GM12878 (cell line): ENCODE measurements at regions of chr6 and their contacts with region 1.

Region 1: GRCh38 chr6:34638834-34639736 is 57.5 kb downstream of the ILRUN start:
- DNase-seq: peak; percentile 87
- ATAC-seq: peak; percentile 86
- H3K4me3 ChIP-seq: no peak overlapping the region
- H3K27ac ChIP-seq: peak overlapping the region; percentile 93
- H3K4me1 ChIP-seq: peaks cover 27% of the 10 kb centered on the region
- H3K27me3 ChIP-seq: no peaks in the 10 kb centered on the region
- CTCF ChIP-seq: no peak
- EP300 ChIP-seq: peak; percentile 79 to 80
- POLR2A ChIP-seq: no peak
- RAD21 ChIP-seq: no peak

Region 2: GRCh38 chr6:34650823-34651222 is 11.7 kb after region 1 on chr6:
- CTCF ChIA-PET with region 1: interaction called, 131 read pairs
- POLR2A ChIA-PET with region 1: interaction called, 246 read pairs
- RAD21 ChIA-PET with region 1: interaction called, 239 read pairs
- SMC1A ChIA-PET with region 1: interaction called, 251 read pairs
- in situ Hi-C with region 1: no loop called
- intact Hi-C with region 1: loop called (anchors 1 kb)
- DNase-seq: no peak
- ATAC-seq: no peak
- H3K4me3 ChIP-seq: no peak overlapping the region
- H3K27ac ChIP-seq: peak overlapping the region; percentile 71
- H3K4me1 ChIP-seq: peaks cover 35% of the 10 kb centered on the region
- H3K27me3 ChIP-seq: no peaks in the 10 kb centered on the region
- CTCF ChIP-seq: no peak
- EP300 ChIP-seq: no peak
- POLR2A ChIP-seq: no peak
- RAD21 ChIP-seq: no peak

Region 3: GRCh38 chr6:34664256-34664971 is 25.3 kb after region 1 on chr6:
- CTCF ChIA-PET with region 1: interaction called, 6 read pairs
- POLR2A ChIA-PET with region 1: interaction called, 246 read pairs
- RAD21 ChIA-PET with region 1: interaction called, 239 read pairs
- SMC1A ChIA-PET with region 1: interaction called, 251 read pairs
- in situ Hi-C with region 1: no loop called
- intact Hi-C with region 1: no loop called
- DNase-seq: no peak
- ATAC-seq: no peak
- H3K4me3 ChIP-seq: peak overlapping the region; percentile 2; the same call in 1 of the 2 replicates
- H3K27ac ChIP-seq: peak overlapping the region; percentile 84
- H3K4me1 ChIP-seq: peaks cover 48% of the 10 kb centered on the region
- H3K27me3 ChIP-seq: no peaks in the 10 kb centered on the region
- CTCF ChIP-seq: no peak
- EP300 ChIP-seq: no peak
- POLR2A ChIP-seq: no peak
- RAD21 ChIP-seq: no peak

Region 4: DNA sequence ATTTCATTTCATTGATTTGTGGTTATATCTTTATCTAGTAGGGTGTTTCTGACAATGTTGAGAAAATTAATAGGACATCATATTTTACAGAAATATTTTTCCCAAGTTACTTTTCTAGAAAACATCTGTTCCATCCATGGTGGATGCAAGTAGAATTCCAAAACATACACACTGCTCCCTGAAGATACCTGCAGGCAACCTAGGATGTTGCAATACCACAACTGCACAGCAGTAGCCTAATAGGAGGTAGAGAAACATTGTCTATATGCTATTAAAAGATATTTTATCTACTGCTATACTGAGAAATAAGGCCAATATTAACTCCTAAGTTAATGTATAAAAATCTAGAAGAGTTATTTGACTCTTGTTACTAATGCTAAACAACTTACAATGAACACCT is 50.7 kb after region 1 on chr6:
- CTCF ChIA-PET with region 1: interaction called, 4 read pairs
- POLR2A ChIA-PET with region 1: interaction called, 19 read pairs
- RAD21 ChIA-PET with region 1: interaction called, 10 read pairs
- SMC1A ChIA-PET with region 1: interaction called, 213 read pairs
- in situ Hi-C with region 1: no loop called
- intact Hi-C with region 1: no loop called
- DNase-seq: no peak
- ATAC-seq: peak; percentile 18; the same call in 1 of the 3 replicates
- H3K4me3 ChIP-seq: no peak overlapping the region
- H3K27ac ChIP-seq: no peak overlapping the region
- H3K4me1 ChIP-seq: no peaks in the 10 kb centered on the region; the same call in 1 of the 2 replicates
- H3K27me3 ChIP-seq: no peaks in the 10 kb centered on the region
- CTCF ChIP-seq: 0 out of 6 replicates have a peak, but pooled peaks of 1 of the 3 experiments have one; percentile 7
- EP300 ChIP-seq: no peak
- POLR2A ChIP-seq: no peak
- RAD21 ChIP-seq: no peak

Region 5: DNA sequence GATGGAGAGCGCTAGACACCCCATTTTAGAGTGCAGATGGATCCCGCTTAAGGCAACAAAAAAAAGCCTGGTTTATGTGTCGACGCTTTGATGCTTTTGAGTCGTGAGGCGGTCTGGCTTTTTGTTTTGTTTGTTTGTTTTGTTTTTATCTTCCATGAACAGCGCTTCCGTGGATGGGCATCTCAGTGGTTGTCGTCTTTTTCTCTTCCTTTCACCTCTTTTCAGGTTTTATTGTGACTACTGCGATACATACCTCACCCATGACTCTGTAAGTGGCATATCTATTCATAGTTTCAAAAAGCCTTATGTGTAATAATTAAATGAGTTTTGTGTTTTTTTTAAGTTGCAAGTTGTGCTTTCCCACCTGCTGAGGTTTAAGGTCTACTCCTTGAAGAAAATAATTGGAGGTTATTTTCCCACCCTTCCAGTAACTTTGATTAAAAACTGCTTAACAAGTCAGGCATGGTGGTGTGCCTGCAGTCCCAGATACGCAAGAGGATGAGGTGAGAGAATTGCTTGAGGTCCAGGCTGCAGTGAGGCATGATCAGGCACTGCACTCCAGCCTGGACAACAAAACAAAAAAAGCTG is 118.7 kb after region 1 on chr6:
- CTCF ChIA-PET with region 1: interaction called, 4 read pairs
- POLR2A ChIA-PET with region 1: interaction called, 5 read pairs
- RAD21 ChIA-PET with region 1: interaction called, 12 read pairs
- SMC1A ChIA-PET with region 1: interaction called, 9 read pairs
- in situ Hi-C with region 1: no loop called
- intact Hi-C with region 1: loop called (anchors 2 kb)
- DNase-seq: no peak
- ATAC-seq: no peak
- H3K4me3 ChIP-seq: peak overlapping the region; percentile 91
- H3K27ac ChIP-seq: peak overlapping the region; percentile 86
- H3K4me1 ChIP-seq: 0 out of 2 replicates have a peak, but pooled peaks cover 5% of the 10 kb centered on the region
- H3K27me3 ChIP-seq: no peaks in the 10 kb centered on the region
- CTCF ChIP-seq: no peak
- EP300 ChIP-seq: no peak
- POLR2A ChIP-seq: no peak
- RAD21 ChIP-seq: no peak